ENCODE measurements at regions of chr14 and their contacts with region 1.

Region 1: DNA sequence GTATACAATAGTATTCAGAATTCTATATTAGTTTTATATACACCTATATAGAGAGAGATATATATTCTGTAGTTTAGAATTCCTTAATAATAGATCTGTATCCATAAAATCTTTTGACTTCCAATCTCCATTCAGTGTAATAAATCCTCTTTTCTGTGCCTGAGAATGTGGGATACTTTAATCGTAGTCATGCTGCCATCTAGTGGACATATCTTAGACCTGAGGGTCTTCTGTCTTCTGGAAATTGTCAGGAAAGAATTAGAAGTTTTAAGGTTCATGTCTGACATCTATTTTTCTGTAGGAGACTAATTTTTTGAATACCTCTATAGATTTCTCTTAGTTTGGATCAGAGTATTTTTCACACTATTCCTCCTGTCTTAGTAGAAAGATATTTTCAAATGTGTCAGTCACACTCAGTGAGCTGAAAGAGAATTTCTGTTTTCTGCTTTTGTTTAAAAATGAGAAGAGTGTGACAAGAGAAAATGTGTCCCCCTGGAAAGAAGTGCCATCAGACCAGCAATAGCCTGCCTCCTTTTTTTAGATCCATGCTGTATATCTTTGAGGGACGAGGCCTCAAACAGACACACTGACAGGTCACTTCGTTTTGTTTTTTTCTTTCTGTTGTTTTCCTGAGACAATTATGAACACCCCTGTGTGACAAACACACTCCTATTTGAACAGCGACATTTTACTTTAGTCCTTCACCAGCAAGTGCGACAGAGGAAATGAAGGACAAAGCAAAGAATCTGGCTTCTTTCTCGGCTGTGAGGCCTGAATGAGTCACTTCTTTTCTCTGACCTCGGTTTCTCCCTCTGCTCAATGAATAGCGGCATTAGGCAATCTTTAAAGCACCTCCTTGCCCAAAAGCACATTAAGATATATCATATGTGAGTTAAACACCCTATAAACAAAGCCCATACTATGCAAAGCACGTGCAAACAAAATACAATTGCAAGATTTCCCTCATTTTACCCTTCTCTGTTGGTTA is 96.3 kb downstream of the GALC start:
- DNase-seq: no peak
- H3K4me3 ChIP-seq: no peak overlapping the region
- H3K27ac ChIP-seq: no peak overlapping the region
- H3K4me1 ChIP-seq: peaks cover 0 to 3% (median 0%) of the 10 kb centered on the region in 4 donors
- H3K27me3 ChIP-seq: no peaks in the 10 kb centered on the region
- CTCF ChIP-seq: peak; percentile 48 to 71 (median 68)
- EP300 ChIP-seq: no peak
- POLR2A ChIP-seq: no peak

Region 2: DNA sequence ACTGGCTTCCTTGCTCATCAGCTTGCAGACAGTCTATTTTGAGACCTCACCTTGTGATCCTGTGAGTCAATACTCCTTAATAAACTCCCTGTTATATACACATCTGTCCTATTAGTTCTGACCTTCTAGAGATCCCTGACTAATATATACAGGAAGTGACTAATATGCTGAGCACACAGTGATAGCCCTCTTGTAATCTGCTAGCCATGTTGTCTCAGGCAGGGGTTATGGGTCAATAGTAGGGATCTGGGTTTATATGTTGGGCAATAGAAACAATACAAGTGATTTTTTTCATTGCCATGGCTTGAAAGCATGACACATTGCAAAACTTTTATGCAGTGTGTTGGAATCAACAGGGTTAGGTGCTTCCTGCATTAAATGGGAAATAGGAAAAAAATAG is 465.9 kb before region 1 on chr14:
- intact Hi-C with region 1: loop called (anchors 10 kb)
- DNase-seq: no peak
- H3K4me3 ChIP-seq: no peak overlapping the region
- H3K27ac ChIP-seq: no peak overlapping the region
- H3K4me1 ChIP-seq: no peaks in the 10 kb centered on the region
- H3K27me3 ChIP-seq: no peaks in the 10 kb centered on the region
- CTCF ChIP-seq: no peak
- EP300 ChIP-seq: no peak
- POLR2A ChIP-seq: no peak

Region 3: GRCh38 chr14:87794561-87794960 is 102.1 kb before region 1 on chr14:
- intact Hi-C with region 1: no loop called
- DNase-seq: no peak
- H3K4me3 ChIP-seq: no peak overlapping the region
- H3K27ac ChIP-seq: no peak overlapping the region
- H3K4me1 ChIP-seq: no peaks in the 10 kb centered on the region
- H3K27me3 ChIP-seq: no peaks in the 10 kb centered on the region
- CTCF ChIP-seq: no peak
- EP300 ChIP-seq: no peak
- POLR2A ChIP-seq: no peak

Region 4: GRCh38 chr14:87805315-87805723 is 91.4 kb before region 1 on chr14:
- intact Hi-C with region 1: loop called (anchors 10 kb)
- DNase-seq: no peak
- H3K4me3 ChIP-seq: no peak overlapping the region
- H3K27ac ChIP-seq: no peak overlapping the region
- H3K4me1 ChIP-seq: no peaks in the 10 kb centered on the region
- H3K27me3 ChIP-seq: no peaks in the 10 kb centered on the region
- CTCF ChIP-seq: peak; percentile 13 to 51 (median 42)
- EP300 ChIP-seq: no peak
- POLR2A ChIP-seq: no peak